Spleen (tissue), 13 donors: ENCODE measurements at regions of chr2 and their contacts with region 1.

Region 1: GRCh38 chr2:134118279-134119116 is 135.4 kb upstream of the MGAT5 start:
- DNase-seq: peak; percentile 90
- H3K4me3 ChIP-seq: peak overlapping the region in 3 of 8 donors; percentile 96 to 99 (median 99)
- H3K27ac ChIP-seq: peak overlapping the region in 6 of 8 donors; percentile 6 to 97 (median 94)
- H3K4me1 ChIP-seq: peaks cover 32 to 48% (median 43%) of the 10 kb centered on the region in 6 donors
- H3K27me3 ChIP-seq: no peaks in the 10 kb centered on the region
- CTCF ChIP-seq: peak; percentile 64 to 88 (median 80)
- POLR2A ChIP-seq: no peak

Region 2: GRCh38 chr2:133886735-133887660 is 231.5 kb before region 1 on chr2:
- intact Hi-C with region 1: loop called (anchors 10 kb)
- DNase-seq: peak; percentile 82
- H3K4me3 ChIP-seq: no peak overlapping the region
- H3K27ac ChIP-seq: no peak overlapping the region
- H3K4me1 ChIP-seq: peaks cover 0 to 13% (median 5%) of the 10 kb centered on the region in 6 donors
- H3K27me3 ChIP-seq: peaks cover 0 to 8% (median 0%) of the 10 kb centered on the region in 7 donors
- CTCF ChIP-seq: peak; percentile 22 to 73 (median 61)
- POLR2A ChIP-seq: no peak

Region 3: DNA sequence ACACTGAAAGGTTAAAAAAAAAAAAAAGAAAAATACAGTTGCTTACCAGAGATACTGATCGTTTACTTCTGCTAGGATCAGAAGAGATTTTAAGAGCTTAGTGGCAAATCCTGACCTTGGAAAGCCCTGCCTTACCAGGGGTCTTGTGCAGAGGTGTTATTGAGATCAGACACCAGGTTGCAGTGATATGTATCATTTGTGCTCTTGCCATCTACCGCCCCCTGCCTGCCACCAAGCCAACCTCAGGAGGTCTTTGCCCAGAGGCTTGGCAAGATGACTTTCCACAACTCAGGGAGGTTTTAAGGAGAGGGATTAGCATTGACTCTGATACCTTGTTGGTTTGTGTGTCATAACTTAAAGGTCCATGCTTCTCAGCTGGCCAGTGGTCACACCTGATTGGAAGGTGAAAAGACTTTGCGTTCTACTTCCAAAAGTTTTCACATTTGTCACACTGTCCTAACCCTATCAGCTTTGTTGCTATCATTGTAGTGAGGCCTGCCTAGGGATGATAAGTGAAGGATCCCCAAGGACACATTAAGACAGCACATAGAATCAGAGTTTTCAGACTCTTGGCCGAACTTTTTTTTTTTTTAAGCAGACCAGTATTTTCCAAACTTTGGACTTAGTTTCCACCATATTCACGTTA is 89.2 kb after region 1 on chr2:
- intact Hi-C with region 1: loop called (anchors 5 kb)
- DNase-seq: peak; percentile 83
- H3K4me3 ChIP-seq: no peak overlapping the region
- H3K27ac ChIP-seq: peak overlapping the region in 3 of 8 donors; percentile 50 to 64 (median 61)
- H3K4me1 ChIP-seq: peaks cover 28 to 63% (median 45%) of the 10 kb centered on the region in 6 donors
- H3K27me3 ChIP-seq: no peaks in the 10 kb centered on the region
- CTCF ChIP-seq: peak; percentile 45 to 80 (median 74)
- POLR2A ChIP-seq: no peak

Region 4: DNA sequence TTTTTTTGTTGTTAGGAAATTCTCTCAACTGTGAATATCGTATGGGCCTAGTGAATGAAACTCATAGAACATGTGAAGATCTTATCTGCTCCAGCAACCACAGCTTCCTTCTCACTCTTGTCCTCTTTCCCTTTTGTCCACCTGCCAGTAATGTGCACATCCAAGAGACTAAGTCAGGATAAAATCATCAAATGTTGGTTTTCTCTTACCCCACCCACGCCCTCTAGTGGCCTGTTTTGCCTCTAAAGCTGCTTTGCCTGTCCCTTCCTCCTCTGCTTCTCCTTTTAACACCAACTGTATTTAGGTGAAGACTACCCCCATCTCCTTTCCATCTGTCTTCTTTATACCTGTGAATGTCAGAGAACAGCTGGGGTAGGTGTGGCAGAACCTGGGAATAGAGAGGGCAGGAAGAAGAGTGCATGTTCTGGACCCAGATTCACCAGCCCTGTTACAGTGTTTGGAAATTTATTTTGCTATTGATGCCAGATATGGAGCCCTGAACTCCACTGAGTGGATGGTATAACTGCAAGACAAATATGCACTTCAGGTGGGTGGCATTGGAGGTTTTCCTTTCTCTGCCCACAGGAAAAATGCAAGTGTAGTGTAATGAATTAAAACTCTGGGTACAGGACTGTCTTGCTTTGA is 127.0 kb after region 1 on chr2:
- intact Hi-C with region 1: loop called (anchors 5 kb)
- DNase-seq: peak; percentile 87
- H3K4me3 ChIP-seq: peak overlapping the region in 1 of 8 donors; percentile 35
- H3K27ac ChIP-seq: peak overlapping the region in 6 of 8 donors; percentile 10 to 86 (median 66)
- H3K4me1 ChIP-seq: peaks cover 39 to 100% (median 83%) of the 10 kb centered on the region in 6 donors
- H3K27me3 ChIP-seq: no peaks in the 10 kb centered on the region
- CTCF ChIP-seq: peak; percentile 73 to 91 (median 84)
- POLR2A ChIP-seq: no peak

Region 5: DNA sequence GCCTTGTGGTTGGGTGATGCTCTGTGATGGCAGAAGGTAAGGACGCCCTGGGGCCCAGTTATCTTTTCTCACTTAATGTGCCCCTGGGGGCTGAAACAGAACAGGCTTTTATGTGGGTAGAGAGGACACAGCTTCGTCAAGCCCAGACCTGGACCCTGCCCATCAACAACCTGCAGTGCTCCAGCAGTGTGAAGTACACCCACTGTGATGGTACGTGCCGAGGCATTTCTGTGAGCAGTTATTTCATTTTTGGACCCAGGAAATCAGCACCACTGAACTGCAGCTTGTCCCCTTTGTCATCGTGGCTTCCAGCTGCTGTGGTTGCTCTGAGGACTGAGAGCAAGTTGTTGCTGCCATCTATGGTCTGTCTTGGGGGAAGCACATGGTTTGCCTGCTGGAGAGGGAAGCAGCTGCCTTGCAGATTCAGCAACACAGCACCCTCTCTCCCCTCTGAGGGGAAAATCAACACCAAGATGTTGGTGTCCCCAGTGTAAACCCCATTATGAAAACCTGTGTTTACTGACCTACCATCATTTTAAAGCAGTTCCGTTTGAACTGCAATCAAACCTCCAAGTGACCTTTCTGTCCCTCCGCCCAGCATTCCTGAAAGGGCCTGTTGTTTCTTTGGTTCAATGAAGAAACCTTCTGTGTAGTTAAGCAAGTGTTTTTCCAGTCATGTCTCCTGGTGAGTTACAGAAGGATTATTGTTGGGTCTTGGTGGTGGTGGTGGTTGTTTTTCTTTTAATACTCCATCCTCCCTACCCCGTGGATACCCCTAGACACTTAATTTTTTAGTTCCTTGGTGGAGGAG is 293.5 kb after region 1 on chr2:
- intact Hi-C with region 1: loop called (anchors 2 kb)
- DNase-seq: peak; percentile 89
- H3K4me3 ChIP-seq: no peak overlapping the region
- H3K27ac ChIP-seq: peak overlapping the region; percentile 10 to 74 (median 58)
- H3K4me1 ChIP-seq: peaks cover 7 to 53% (median 40%) of the 10 kb centered on the region in 6 donors
- H3K27me3 ChIP-seq: no peaks in the 10 kb centered on the region
- CTCF ChIP-seq: peak; percentile 44 to 80 (median 68)
- POLR2A ChIP-seq: no peak

Region 6: GRCh38 chr2:134457765-134458472 is 339.4 kb after region 1 on chr2:
- intact Hi-C with region 1: loop called (anchors 10 kb)
- DNase-seq: no peak
- H3K4me3 ChIP-seq: no peak overlapping the region
- H3K27ac ChIP-seq: no peak overlapping the region
- H3K4me1 ChIP-seq: peaks cover 0 to 10% (median 0%) of the 10 kb centered on the region in 6 donors
- H3K27me3 ChIP-seq: no peaks in the 10 kb centered on the region
- CTCF ChIP-seq: no peak
- POLR2A ChIP-seq: no peak